ENCODE measurements at regions of chr14 and their contacts with region 1.

Region 1: DNA sequence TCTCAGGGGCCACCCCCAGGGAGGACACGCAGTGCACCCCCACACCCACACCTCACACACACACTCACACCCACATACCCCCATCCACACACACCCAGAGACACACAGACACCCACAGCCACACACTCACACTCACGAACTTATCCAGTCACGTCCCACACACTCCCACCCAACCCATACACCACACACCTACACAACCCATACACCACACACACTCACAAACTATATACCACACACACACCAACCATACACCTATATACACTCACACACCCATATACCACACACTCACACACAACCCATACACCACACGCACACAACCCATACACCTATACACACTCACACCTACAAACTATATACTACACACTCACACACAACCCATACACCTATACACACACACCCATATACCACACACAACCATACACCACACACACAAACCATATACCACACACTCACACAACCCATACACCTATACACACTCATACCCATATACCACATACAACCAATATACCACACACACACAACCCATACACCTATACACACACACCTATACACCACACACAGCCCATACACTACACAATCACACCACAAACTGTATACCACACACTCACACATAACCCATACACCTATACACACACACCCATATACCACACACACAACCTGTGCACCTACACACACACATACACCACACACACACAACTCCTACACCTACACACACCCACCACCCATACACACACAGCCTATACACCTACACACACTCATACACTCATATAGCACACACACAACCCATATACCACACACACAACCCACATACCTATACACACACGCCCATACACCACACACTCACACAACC is 42.7 kb downstream of the TMEM121 start:
- DNase-seq: no peak
- H3K4me3 ChIP-seq: no peak overlapping the region
- H3K4me1 ChIP-seq: no peaks in the 10 kb centered on the region
- H3K27me3 ChIP-seq: no peaks in the 10 kb centered on the region

Region 2: DNA sequence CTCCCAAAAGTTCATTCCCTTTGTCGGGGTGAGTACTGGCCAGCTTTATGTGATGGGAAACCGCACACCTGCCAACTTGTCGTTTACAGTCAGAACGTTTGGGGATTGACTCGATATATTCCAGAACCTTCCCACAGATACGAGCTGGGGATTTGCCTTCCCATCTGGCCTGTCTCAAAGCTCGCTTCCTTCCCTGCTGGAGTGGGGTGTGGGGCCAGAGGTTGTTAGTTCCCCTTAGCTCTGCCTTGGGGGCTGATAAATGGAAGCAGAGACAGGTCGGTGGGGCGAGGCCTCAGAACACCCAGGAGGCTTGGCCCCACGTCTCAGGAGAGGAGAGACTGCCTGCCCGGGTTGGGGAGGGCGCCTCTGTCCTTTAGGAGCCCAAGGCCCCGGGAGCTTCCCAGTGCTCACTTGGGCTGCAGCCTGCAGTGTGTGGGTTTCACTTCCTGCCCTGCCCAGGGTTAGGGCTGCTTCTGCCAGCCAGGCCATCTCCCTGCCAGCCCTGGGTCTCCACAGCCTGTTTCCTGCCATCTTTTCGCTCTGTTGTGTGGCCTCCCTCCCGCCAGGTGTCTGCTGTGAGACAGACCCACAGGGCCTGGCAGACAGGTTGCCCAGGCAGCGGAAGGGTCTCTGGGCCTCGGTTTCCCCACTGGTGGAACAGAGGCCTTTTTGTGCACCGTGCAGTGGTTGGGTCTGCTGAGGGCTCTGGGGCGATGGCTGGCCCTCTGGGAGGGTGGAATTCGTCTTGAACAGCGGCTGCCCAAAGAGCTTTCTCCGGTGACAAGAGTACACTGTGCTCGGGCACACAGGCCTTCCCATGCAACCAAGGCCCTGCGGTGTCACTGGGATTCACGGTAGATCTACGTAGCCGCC is 178.9 kb before region 1 on chr14:
- in situ Hi-C with region 1: no loop called
- DNase-seq: no peak
- H3K4me3 ChIP-seq: no peak overlapping the region
- H3K4me1 ChIP-seq: no peaks in the 10 kb centered on the region
- H3K27me3 ChIP-seq: no peaks in the 10 kb centered on the region

Region 3: GRCh38 chr14:105517096-105517495 is 52.0 kb before region 1 on chr14:
- in situ Hi-C with region 1: no loop called
- DNase-seq: no peak
- H3K4me3 ChIP-seq: no peak overlapping the region
- H3K4me1 ChIP-seq: no peaks in the 10 kb centered on the region
- H3K27me3 ChIP-seq: peaks cover 35% of the 10 kb centered on the region

Region 4: GRCh38 chr14:105689728-105690127 is 120.6 kb after region 1 on chr14:
- in situ Hi-C with region 1: loop called (anchors 5 kb)
- DNase-seq: no peak
- H3K4me3 ChIP-seq: no peak overlapping the region
- H3K4me1 ChIP-seq: no peaks in the 10 kb centered on the region
- H3K27me3 ChIP-seq: no peaks in the 10 kb centered on the region